ENCODE measurements at regions of chr1 and their contacts with region 1.

Region 1: DNA sequence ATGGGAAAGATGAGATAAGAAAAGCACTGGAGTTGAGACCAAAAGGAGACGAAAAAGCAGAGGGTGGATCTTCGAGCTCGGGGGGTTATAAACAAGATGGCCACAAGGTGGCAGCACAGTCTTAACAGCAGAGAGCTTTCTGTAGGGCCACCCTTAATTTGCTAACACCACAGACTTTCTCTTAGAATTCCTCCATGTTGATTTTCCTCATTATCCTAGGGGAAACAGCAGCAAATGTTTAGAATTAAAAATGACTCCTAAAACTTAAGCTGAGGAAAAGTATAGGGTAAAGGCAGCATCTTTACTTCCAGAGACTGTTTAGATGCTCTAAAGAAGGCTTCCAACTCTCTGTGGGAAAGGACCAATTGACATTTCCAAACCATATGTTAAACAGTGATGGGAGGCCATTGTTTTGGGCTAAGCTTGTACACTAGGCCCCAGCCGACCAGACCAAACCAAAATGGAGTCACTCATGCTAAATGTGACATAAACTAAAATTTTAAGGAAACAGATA is 2.5 kb upstream of the APOBEC4 start:
- DNase-seq: peak; percentile 40 to 64
- ATAC-seq: peak; percentile 75 to 76
- H3K4me3 ChIP-seq: no peak overlapping the region
- H3K27ac ChIP-seq: no peak overlapping the region
- H3K4me1 ChIP-seq: no peaks in the 10 kb centered on the region
- H3K27me3 ChIP-seq: no peaks in the 10 kb centered on the region
- CTCF ChIP-seq: peak; percentile 65 to 91 (median 83)
- POLR2A ChIP-seq: no peak

Region 2: GRCh38 chr1:183685112-183685713 is 29.6 kb after region 1 on chr1:
- in situ Hi-C with region 1: no loop called
- intact Hi-C with region 1: loop called (anchors 2 kb)
- DNase-seq: no peak
- ATAC-seq: peak in 1 of 2 donors; percentile 61
- H3K4me3 ChIP-seq: no peak overlapping the region
- H3K27ac ChIP-seq: no peak overlapping the region
- H3K4me1 ChIP-seq: no peaks in the 10 kb centered on the region
- H3K27me3 ChIP-seq: no peaks in the 10 kb centered on the region
- CTCF ChIP-seq: peak; percentile 32 to 74 (median 55)
- POLR2A ChIP-seq: no peak

Region 3: DNA sequence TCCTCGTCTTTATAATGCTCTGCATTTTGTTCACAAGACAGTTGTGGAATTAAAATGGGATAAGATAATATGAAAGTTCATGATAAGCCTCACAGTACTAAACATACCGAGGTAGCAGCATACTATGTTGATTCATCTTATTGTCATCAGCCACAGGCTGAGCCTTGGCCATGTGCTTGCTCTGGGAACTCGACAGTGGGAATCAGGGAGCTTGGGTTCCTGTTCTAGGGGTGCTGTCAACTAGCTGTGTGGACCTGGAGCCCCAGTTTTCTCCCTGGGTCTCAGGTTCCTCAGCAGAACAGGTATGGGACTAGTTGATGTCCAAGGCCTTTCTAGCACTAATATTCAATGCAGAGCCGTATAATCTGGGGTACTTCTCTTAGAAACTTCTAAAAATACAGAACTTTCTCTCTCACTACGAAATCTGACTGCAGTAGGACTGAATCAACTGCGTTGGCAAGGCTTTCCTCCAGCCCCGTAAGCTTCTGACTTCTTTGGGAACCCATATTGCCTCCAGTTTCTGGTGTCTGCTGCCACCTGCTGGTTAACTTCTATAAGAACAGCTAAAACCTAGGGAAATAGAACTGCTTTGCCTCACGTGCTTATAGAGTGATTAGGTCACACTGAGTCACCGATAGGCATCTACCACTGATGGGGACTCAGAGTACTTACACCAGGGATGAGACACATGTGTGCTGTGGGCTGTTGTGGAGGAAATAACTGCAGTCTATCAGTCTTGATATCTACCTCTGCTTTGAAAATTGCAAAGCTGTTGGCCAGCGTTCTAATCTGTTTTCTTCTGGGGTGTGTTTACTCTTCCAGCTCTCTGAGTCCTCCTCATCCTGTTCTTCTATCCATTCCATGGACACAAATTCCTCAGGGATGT is 260.2 kb after region 1 on chr1:
- in situ Hi-C with region 1: loop called in 3 of 4 experiments (anchors 5 kb)
- intact Hi-C with region 1: loop called (anchors 1 kb)
- DNase-seq: peak; percentile 61 to 64
- ATAC-seq: peak; percentile 92 to 95
- H3K4me3 ChIP-seq: no peak overlapping the region
- H3K27ac ChIP-seq: peak overlapping the region in 3 of 4 donors; percentile 27 to 46 (median 36)
- H3K4me1 ChIP-seq: peaks cover 8 to 9% of the 10 kb centered on the region in 2 donors
- H3K27me3 ChIP-seq: no peaks in the 10 kb centered on the region
- CTCF ChIP-seq: peak; percentile 81 to 88 (median 84)
- POLR2A ChIP-seq: no peak

Region 4: GRCh38 chr1:184036517-184036949 is 380.9 kb after region 1 on chr1:
- in situ Hi-C with region 1: loop called in 1 of 4 experiments (anchors 25 kb)
- intact Hi-C with region 1: no loop called
- DNase-seq: peak; percentile 16 to 23
- ATAC-seq: peak; percentile 64
- H3K4me3 ChIP-seq: peak overlapping the region; percentile 59 to 77 (median 68)
- H3K27ac ChIP-seq: peak overlapping the region; percentile 67 to 80 (median 72)
- H3K4me1 ChIP-seq: peaks cover 3 to 11% of the 10 kb centered on the region in 2 donors
- H3K27me3 ChIP-seq: no peaks in the 10 kb centered on the region
- CTCF ChIP-seq: no peak
- POLR2A ChIP-seq: peak; percentile 33 to 39